HEK293 (cell line): ENCODE measurements at regions of chr12 and their contacts with region 1.

Region 1: DNA sequence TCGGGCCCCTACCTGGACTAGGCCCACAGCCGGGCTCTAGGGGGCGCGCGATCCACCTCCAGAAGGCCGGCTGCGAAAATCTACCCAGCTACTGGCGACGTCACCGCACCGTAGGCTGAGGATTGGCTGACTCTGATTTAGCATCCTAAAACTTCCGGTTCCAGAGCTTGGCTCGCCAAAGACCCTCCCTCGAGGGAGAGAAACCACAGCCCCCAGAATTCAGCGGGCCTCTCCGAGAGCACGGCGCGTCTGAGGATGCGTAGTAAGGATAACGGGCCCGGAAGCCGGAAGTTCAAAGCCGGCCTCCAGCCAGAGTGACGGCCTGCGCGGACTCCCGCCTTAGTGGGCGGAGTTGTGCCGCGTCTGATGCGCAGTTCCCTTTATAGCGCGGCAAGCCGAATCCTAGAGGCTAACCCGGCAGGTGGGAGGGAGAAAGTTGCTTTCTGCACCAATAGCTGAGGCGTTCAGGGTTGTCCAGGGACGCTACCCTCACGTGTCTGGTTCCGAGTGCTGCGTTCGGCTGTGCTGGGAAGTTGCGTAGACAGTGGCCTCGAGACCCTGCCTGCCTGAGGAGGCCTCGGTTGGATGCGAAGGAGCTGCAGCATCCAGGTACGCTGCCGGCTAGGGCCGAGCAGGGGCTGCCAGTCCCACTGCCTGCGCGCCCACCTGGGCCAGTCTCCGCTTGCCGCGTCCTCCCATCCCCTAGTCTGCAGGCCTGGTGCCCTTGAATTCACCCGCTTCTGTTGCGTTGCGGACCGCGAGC is at the start of gene COX14:
- H3K4me3 ChIP-seq: peak within 1 kb of the TSS; percentile 75
- H3K27ac ChIP-seq: peak within 1 kb of the TSS; percentile 65
- H3K4me1 ChIP-seq: peaks cover 6% of the 10 kb centered on the region; the same call in 1 of the 2 replicates
- CTCF ChIP-seq: peak; percentile 96; the same call in 1 of the 2 replicates

Region 2: GRCh38 chr12:49903695-49904423 is 208.0 kb before region 1 on chr12 and contains the start of gene FAIM2:
- CTCF ChIA-PET with region 1: no interaction called
- POLR2A ChIA-PET with region 1: no interaction called
- H3K4me3 ChIP-seq: no peak within 1 kb of the TSS
- H3K27ac ChIP-seq: no peak within 1 kb of the TSS
- H3K4me1 ChIP-seq: no peaks in the 10 kb centered on the region
- CTCF ChIP-seq: no peak

Region 3: GRCh38 chr12:50084775-50085614 is 26.9 kb before region 1 on chr12 and contains the start of gene SMARCD1:
- CTCF ChIA-PET with region 1: interaction called, 53 read pairs
- POLR2A ChIA-PET with region 1: interaction called, 68 read pairs
- H3K4me3 ChIP-seq: peak within 1 kb of the TSS; percentile 75
- H3K27ac ChIP-seq: peak within 1 kb of the TSS; percentile 69
- H3K4me1 ChIP-seq: no peaks in the 10 kb centered on the region
- CTCF ChIP-seq: peak; percentile 65

Region 4: DNA sequence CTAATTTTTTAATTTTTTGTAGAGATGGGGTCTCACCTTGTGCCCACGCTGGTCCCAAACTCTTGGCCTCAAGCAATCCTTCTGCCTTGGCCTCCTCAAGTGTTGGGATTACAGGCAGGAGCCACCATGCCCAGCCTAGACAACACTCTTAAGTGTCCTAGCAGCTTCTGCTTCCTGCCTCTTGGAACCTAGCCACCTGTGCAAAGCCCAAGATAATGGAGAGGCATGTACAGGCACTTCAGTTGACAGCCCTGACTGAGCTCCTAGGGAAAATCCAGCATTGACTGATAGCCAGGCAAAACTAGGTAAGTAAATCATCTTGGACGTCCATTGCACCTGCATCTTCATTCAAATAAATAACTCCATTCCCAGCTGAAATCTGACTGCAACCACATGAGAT is 15.7 kb after region 1 on chr12:
- CTCF ChIA-PET with region 1: interaction called, 13 read pairs
- POLR2A ChIA-PET with region 1: interaction called, 19 read pairs
- H3K4me3 ChIP-seq: no peak overlapping the region
- H3K27ac ChIP-seq: no peak overlapping the region
- H3K4me1 ChIP-seq: no peaks in the 10 kb centered on the region
- CTCF ChIP-seq: no peak

Region 5: GRCh38 chr12:50142993-50143392 is 31.1 kb after region 1 on chr12:
- CTCF ChIA-PET with region 1: interaction called, 11 read pairs
- POLR2A ChIA-PET with region 1: interaction called, 9 read pairs
- H3K4me3 ChIP-seq: no peak overlapping the region
- H3K27ac ChIP-seq: no peak overlapping the region
- H3K4me1 ChIP-seq: peaks cover 6% of the 10 kb centered on the region
- CTCF ChIP-seq: no peak

Region 6: GRCh38 chr12:50167041-50167828 is 55.4 kb after region 1 on chr12 and contains the start of gene CERS5:
- CTCF ChIA-PET with region 1: interaction called, 32 read pairs
- POLR2A ChIA-PET with region 1: interaction called, 55 read pairs
- H3K4me3 ChIP-seq: peak within 1 kb of the TSS; percentile 96
- H3K27ac ChIP-seq: peak within 1 kb of the TSS; percentile 84
- H3K4me1 ChIP-seq: peaks cover 3% of the 10 kb centered on the region; the same call in 1 of the 2 replicates
- CTCF ChIP-seq: peak; percentile 36

Region 7: GRCh38 chr12:50174971-50175715 is 63.3 kb after region 1 on chr12:
- CTCF ChIA-PET with region 1: interaction called, 25 read pairs
- POLR2A ChIA-PET with region 1: interaction called, 3 read pairs
- H3K4me3 ChIP-seq: no peak overlapping the region
- H3K27ac ChIP-seq: no peak overlapping the region
- H3K4me1 ChIP-seq: no peaks in the 10 kb centered on the region
- CTCF ChIP-seq: peak; percentile 31; the same call in 1 of the 2 replicates

Region 8: GRCh38 chr12:50222275-50222795 is 110.5 kb after region 1 on chr12:
- CTCF ChIA-PET with region 1: no interaction called
- POLR2A ChIA-PET with region 1: interaction called, 10 read pairs
- H3K4me3 ChIP-seq: peak overlapping the region; percentile 45
- H3K27ac ChIP-seq: peak overlapping the region; percentile 88
- H3K4me1 ChIP-seq: peaks cover 22% of the 10 kb centered on the region
- CTCF ChIP-seq: peak; percentile 39; the same call in 1 of the 2 replicates

Region 9: GRCh38 chr12:51083126-51083833 is 971.4 kb after region 1 on chr12 and contains the start of gene CSRNP2:
- CTCF ChIA-PET with region 1: no interaction called
- POLR2A ChIA-PET with region 1: no interaction called
- H3K4me3 ChIP-seq: peak within 1 kb of the TSS; percentile 91
- H3K27ac ChIP-seq: peak within 1 kb of the TSS; percentile 63
- H3K4me1 ChIP-seq: peaks cover 5% of the 10 kb centered on the region; the same call in 1 of the 2 replicates
- CTCF ChIP-seq: no peak